ENCODE measurements at regions of chr9 and their contacts with region 1.

Region 1: DNA sequence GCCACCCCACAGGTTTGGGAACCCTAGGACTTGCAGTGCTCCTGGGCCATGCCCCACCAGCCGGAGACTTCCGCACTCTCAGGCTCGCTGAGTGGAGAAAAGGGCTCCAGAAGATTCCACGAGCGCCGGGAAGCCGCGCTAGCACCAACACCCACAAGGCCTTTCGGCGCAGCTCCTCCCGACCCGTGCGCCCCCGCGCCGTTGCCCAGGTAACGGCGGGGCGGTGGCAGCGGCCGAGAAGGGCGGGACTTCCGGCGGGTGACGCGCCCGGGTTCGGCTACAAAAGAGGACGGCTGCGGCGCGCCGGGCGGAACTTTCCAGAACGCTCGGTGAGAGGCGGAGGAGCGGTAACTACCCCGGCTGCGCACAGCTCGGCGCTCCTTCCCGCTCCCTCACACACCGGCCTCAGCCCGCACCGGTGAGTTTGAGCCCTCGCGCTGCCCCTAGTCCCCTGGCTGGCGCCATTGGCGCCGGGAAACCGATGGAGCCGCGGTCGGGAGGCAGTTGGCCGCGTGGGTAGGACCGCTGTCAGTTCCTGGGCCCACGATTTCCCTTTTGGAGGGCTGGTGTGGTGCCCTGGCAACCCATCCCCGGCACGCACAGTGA is at the start of gene DNAJA1:
- DNase-seq: peak; percentile 85 to 93 (median 88)
- ATAC-seq: peak; percentile 91
- H3K4me3 ChIP-seq: peak within 1 kb of the TSS; percentile 97
- H3K27ac ChIP-seq: peak within 1 kb of the TSS; percentile 94
- H3K4me1 ChIP-seq: peaks cover 13 to 14% of the 10 kb centered on the region in 2 experiments; a peak in 4 of 5 replicates
- H3K27me3 ChIP-seq: no peaks in the 10 kb centered on the region
- CTCF ChIP-seq: no peak; a peak in 1 of 6 replicates
- EP300 ChIP-seq: no peak; the same call in 1 of the 2 replicates
- POLR2A ChIP-seq: peak; percentile 98
- RAD21 ChIP-seq: no peak
- polyA plus RNA-seq, gene DNAJA1: 164 to 359 TPM

Region 2: DNA sequence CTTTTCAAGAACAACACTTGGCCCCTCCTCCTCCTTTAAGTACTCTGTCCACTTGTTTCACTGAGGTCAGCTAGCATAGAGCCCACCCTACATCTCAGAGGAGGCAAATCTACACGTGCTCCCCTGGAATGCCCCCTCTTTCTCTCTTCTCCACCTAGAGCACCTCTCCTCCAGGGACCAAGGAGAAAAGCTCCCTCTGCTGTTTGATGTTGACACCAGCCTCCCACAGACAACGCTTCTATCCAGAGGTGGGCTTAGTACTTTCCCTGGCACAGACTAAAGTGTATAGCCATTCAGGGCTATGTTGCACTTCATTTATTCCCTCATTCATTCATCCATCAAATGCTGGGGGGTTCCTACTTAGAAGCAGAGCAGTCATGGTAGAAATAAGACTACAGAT is 321.4 kb before region 1 on chr9:
- CTCF ChIA-PET with region 1: no interaction called
- POLR2A ChIA-PET with region 1: no interaction called
- in situ Hi-C with region 1: no loop called
- intact Hi-C with region 1: no loop called
- DNase-seq: peak in 1 of 4 experiments; percentile 5
- ATAC-seq: peak; percentile 65; the same call in 2 of the 3 replicates
- H3K4me3 ChIP-seq: no peak overlapping the region
- H3K27ac ChIP-seq: no peak overlapping the region
- H3K4me1 ChIP-seq: no peaks in the 10 kb centered on the region; a peak in 3 of 5 replicates
- H3K27me3 ChIP-seq: no peaks in the 10 kb centered on the region
- CTCF ChIP-seq: peak; percentile 23 to 24 (median 24); a peak in 3 of 6 replicates
- EP300 ChIP-seq: no peak
- POLR2A ChIP-seq: no peak
- RAD21 ChIP-seq: no peak; a peak in 1 of 4 replicates

Region 3: DNA sequence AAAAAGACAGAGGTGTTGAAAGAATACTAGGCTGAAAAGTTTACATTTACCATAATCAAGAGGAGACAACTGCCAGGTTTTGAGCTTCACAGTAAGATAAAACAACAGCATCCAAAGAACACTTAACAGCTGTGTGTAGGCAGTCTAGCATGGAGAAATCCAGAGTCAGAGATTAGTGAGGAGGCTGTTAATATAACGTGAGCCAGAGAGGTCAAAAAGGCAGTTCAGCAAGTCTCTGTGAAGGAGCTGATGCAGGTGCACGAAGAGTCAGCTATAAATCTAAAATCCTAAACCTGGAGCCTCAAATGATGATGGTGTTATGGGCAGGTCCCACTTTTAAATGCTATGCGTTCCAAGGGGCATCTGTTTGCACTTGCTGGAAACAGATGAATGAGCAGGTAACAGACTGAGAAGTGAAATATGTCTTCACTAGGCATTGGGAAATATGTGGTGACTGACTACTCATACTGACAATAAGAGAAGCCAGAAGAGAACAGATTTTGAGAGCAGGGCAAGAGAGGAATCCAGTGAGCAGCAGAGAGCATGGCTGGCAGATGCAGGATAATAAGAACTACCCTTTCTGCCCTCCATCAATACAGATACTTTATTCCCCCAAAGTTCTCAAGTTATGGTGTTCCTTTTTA is 32.4 kb before region 1 on chr9:
- CTCF ChIA-PET with region 1: no interaction called
- POLR2A ChIA-PET with region 1: interaction called, 7 read pairs
- in situ Hi-C with region 1: no loop called
- intact Hi-C with region 1: loop called (anchors 2 kb)
- DNase-seq: peak in 1 of 4 experiments; percentile 12
- ATAC-seq: peak; percentile 61
- H3K4me3 ChIP-seq: no peak overlapping the region
- H3K27ac ChIP-seq: peak overlapping the region; percentile 34; the same call in 1 of the 3 replicates
- H3K4me1 ChIP-seq: peaks cover 14 to 22% of the 10 kb centered on the region in 2 experiments; a peak in 4 of 5 replicates
- H3K27me3 ChIP-seq: no peaks in the 10 kb centered on the region
- CTCF ChIP-seq: no peak
- EP300 ChIP-seq: no peak
- POLR2A ChIP-seq: no peak
- RAD21 ChIP-seq: no peak

Region 4: DNA sequence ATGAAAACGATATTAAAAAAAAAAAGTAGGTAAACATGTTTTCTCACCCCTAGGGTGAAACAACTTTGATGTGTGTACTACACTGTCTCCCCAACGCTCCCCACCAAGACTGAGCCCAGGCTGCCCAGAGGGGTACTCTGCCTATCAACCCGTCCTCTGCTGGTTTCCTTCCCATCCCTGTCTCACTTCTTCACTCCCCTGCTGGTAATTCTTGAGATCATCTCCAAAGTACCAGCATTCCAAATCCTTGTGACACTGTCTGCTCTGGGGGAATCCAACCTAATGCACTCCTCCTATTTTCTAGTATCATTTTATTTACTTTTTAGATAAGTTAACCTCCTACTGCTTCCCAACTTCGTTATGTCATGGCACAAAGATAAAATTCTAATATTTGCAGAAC is 17.3 kb before region 1 on chr9:
- CTCF ChIA-PET with region 1: no interaction called
- POLR2A ChIA-PET with region 1: interaction called, 64 read pairs
- in situ Hi-C with region 1: no loop called
- intact Hi-C with region 1: no loop called
- DNase-seq: no peak
- ATAC-seq: no peak
- H3K4me3 ChIP-seq: no peak overlapping the region
- H3K27ac ChIP-seq: no peak overlapping the region
- H3K4me1 ChIP-seq: peaks cover 0 to 4% of the 10 kb centered on the region in 2 experiments; a peak in 2 of 5 replicates
- H3K27me3 ChIP-seq: no peaks in the 10 kb centered on the region
- CTCF ChIP-seq: no peak
- EP300 ChIP-seq: no peak
- POLR2A ChIP-seq: no peak
- RAD21 ChIP-seq: no peak

Region 5: DNA sequence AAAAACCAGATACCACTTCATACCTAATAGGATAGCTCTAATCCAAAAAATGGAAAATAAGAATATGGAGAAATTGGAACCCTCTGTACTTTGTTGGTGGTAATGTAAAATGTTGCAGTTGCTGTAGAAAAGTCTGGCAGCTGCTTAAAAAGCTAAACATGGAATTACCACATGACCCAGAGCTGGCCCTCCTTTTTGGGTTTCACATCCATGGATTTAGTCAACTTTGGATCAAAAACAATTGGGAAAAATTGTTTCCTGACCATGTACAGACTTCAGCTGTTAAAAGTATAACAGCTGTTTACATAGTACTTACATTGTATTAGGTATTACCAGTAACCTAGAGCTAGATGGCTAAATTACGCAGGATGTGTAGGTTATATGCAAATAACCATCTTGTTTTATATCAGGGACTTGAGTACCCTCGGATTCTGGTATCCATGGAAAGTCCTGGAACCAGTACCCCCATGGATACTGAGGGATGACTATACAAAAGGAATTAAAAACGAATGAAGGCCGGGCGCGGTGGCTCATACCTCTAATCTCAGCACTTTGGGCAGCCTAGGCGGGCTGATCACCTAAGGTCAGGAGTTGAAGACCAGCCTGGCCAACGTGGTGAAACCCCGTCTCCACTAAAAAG is 15.8 kb after region 1 on chr9:
- CTCF ChIA-PET with region 1: no interaction called
- POLR2A ChIA-PET with region 1: interaction called, 51 read pairs
- in situ Hi-C with region 1: no loop called
- intact Hi-C with region 1: no loop called
- DNase-seq: no peak
- ATAC-seq: peak; percentile 12; the same call in 2 of the 3 replicates
- H3K4me3 ChIP-seq: no peak overlapping the region
- H3K27ac ChIP-seq: no peak overlapping the region
- H3K4me1 ChIP-seq: no peaks in the 10 kb centered on the region
- H3K27me3 ChIP-seq: no peaks in the 10 kb centered on the region
- CTCF ChIP-seq: no peak
- EP300 ChIP-seq: no peak
- POLR2A ChIP-seq: no peak
- RAD21 ChIP-seq: no peak